HepG2 (cell line): ENCODE measurements at regions of chr15 and their contacts with region 1.

Region 1: DNA sequence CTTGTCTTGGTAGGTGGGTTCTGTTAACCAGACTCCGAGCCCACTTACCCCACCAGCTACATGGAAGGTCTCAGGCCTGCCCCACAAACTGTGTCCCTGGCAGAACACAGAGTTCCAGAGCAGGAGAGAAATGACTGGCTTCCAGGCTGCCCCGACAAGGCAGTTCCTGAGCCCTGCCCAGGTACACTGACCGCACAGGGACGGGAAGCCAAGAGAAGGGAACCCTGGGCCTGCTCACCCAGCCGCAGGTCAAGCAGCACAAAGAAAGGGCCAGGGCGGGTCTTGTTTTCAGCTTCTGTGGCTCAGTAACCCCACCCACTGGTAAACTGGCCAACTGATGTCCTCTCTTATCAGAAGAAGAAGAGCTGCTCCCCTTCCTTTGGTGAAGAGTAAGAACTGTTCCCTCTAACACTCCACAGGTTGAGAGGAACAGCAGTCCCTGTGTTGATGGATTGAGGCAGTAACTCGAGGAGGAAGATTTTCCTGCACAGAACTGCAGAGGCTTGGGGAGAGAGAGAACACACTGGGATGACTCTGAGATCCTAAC is 68.4 kb downstream of the CRTC3 start:
- DNase-seq: peak; percentile 40
- ATAC-seq: peak; percentile 86
- H3K4me3 ChIP-seq: no peak overlapping the region
- H3K27ac ChIP-seq: no peak overlapping the region
- H3K4me1 ChIP-seq: peaks cover 14% of the 10 kb centered on the region
- H3K27me3 ChIP-seq: no peaks in the 10 kb centered on the region
- CTCF ChIP-seq: peak; percentile 65
- EP300 ChIP-seq: no peak
- POLR2A ChIP-seq: no peak
- RAD21 ChIP-seq: 0 out of 2 replicates have a peak, but pooled peaks have one; percentile 28

Region 2: DNA sequence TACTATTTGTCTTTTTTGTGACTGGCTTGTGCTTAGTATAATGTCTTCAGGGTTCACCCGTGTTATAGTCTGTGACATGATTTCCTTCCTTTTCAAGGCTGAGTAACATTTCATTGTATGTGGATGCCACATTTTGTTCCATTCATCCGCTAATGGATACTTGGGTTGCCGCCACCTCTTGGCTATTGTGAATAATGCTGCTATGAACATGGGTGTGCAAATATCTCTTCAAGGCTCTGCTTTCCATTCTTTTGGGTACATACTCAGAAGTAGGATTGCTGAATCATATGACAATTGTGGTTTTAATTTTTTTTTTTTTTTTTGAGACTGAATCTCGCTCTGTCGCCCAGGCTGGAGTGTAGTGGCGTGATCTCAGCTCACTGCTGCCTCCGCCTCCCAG is 53.0 kb before region 1 on chr15:
- CTCF ChIA-PET with region 1: no interaction called
- POLR2A ChIA-PET with region 1: no interaction called
- in situ Hi-C with region 1: no loop called
- intact Hi-C with region 1: loop called (anchors 5 kb)
- DNase-seq: no peak
- ATAC-seq: no peak
- H3K4me3 ChIP-seq: no peak overlapping the region
- H3K27ac ChIP-seq: no peak overlapping the region
- H3K4me1 ChIP-seq: peaks cover 11% of the 10 kb centered on the region
- H3K27me3 ChIP-seq: no peaks in the 10 kb centered on the region
- CTCF ChIP-seq: no peak
- EP300 ChIP-seq: no peak
- POLR2A ChIP-seq: no peak
- RAD21 ChIP-seq: no peak

Region 3: GRCh38 chr15:90638201-90638691 is 40.1 kb after region 1 on chr15:
- CTCF ChIA-PET with region 1: no interaction called
- POLR2A ChIA-PET with region 1: no interaction called
- in situ Hi-C with region 1: no loop called
- intact Hi-C with region 1: no loop called
- DNase-seq: no peak
- ATAC-seq: no peak
- H3K4me3 ChIP-seq: no peak overlapping the region
- H3K27ac ChIP-seq: no peak overlapping the region
- H3K4me1 ChIP-seq: no peaks in the 10 kb centered on the region
- H3K27me3 ChIP-seq: no peaks in the 10 kb centered on the region
- CTCF ChIP-seq: no peak
- EP300 ChIP-seq: no peak
- POLR2A ChIP-seq: no peak
- RAD21 ChIP-seq: no peak

Region 4: GRCh38 chr15:90729261-90729660 is 131.2 kb after region 1 on chr15:
- CTCF ChIA-PET with region 1: no interaction called
- POLR2A ChIA-PET with region 1: no interaction called
- in situ Hi-C with region 1: no loop called
- intact Hi-C with region 1: no loop called
- DNase-seq: no peak
- ATAC-seq: no peak
- H3K4me3 ChIP-seq: no peak overlapping the region
- H3K27ac ChIP-seq: no peak overlapping the region
- H3K4me1 ChIP-seq: no peaks in the 10 kb centered on the region
- H3K27me3 ChIP-seq: no peaks in the 10 kb centered on the region
- CTCF ChIP-seq: no peak
- EP300 ChIP-seq: no peak
- POLR2A ChIP-seq: no peak
- RAD21 ChIP-seq: no peak